ENCODE measurements at regions of chrX and their contacts with region 1.

Region 1: GRCh38 chrX:109714340-109714958 is 18.6 kb downstream of the ACSL4 start:
- DNase-seq: no peak
- H3K4me3 ChIP-seq: no peak overlapping the region
- H3K27ac ChIP-seq: no peak overlapping the region
- H3K4me1 ChIP-seq: peaks cover 0 to 30% (median 1%) of the 10 kb centered on the region in 4 donors
- H3K27me3 ChIP-seq: no peaks in the 10 kb centered on the region
- CTCF ChIP-seq: no peak

Region 2: DNA sequence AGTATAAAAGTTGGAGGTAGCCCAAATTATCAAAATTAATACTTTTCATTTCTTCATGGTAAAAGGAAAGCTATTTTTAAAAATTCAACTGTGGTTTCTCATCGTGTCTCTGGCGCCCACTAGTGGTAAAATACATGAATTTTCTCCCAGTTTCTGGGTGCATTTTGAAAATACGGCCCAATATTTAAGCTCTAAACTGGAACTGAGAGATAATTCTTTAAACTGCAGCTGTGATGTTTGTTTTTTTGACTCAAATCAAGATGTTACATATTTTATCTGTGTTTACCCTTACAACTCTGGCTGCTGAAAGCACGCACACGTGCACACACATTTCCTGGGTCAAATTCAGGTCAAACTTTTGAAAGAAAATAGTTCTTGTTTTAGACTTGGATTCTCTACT is 142.5 kb after region 1 on chrX:
- intact Hi-C with region 1: loop called (anchors 10 kb)
- DNase-seq: no peak
- H3K4me3 ChIP-seq: no peak overlapping the region
- H3K27ac ChIP-seq: no peak overlapping the region
- H3K4me1 ChIP-seq: no peaks in the 10 kb centered on the region
- H3K27me3 ChIP-seq: no peaks in the 10 kb centered on the region
- CTCF ChIP-seq: peak; percentile 61 to 63

Measured in tibial artery (tissue), 4 donors.